ENCODE measurements at regions of chr2 and their contacts with region 1.

Region 1: DNA sequence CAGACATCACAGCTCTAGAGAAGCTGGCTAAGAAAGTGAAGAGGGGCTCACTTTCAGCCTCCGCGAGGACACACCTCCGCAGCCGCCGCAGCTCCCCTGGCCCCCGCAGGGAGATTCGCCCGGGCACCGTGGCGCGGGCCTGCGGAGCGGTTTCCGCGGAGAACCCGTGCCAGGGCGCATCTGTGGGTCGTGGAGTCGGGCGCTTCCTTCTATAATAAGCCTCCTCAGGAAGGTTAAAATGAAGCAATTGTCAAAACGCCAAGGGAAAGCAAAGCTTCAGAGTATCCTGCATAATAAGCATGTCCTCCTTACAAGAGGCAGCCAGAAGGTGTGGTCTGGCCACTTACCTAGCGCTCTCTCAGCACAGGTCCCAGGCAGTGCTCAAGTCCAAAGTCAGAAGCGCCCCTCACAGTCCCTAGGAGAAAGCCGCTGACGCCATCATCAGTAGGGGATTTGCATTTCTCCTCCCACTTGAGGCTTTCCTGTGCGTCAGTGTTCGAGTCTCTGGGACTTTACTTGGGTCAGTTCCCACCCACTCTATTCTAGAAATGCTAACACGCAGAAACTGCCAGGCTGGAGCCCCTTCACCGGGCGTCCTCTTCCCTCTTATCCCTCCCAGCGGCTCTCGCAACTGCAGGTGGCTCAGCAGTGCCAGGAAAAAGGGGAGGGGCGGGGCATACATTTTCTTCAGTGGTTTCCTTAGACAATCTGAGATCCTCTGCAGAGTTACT is at the start of gene STAT4:
- DNase-seq: no peak
- H3K4me3 ChIP-seq: peak within 1 kb of the TSS; percentile 58
- CTCF ChIP-seq: no peak

Region 2: DNA sequence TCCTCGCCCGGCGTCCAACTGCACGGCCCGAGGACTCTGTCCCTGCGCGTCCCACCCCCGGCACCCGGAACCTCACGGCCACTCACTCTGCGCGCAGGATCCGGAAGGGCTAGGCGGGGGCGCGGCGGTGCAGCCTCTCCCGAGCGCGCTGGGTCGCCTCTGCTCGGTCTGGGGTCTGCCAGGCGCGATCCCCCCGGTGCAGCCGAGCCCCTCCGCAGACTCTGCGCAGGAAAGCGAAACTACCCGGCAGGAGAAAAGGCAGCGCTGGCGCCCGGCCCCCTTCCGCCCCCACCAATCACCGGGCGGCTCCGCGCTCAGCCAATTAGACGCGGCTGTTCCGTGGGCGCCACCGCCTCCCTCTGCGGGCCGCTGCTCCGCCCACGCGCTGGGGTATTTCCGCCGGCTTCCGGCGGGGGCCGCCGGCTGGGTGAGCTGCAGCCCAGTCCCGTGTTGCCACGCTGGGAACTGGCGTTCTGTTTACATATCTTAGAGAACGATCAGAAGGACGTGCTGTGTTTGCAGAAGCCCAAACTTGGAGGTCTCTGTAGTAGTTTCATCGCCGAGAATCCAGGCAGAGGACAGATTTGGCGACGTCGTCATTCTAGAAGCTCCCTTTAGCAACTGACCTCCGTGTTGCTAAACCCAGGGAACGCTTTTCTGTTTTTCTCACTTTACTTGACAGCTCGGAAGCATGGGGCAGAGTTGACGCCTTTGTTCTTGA is 136.7 kb before region 1 on chr2 and contains the start of gene STAT1:
- CTCF ChIA-PET with region 1: interaction called, 13 read pairs
- POLR2A ChIA-PET with region 1: interaction called, 3 read pairs
- DNase-seq: peak; percentile 77
- H3K4me3 ChIP-seq: peak within 1 kb of the TSS; percentile 95
- CTCF ChIP-seq: peak; percentile 2

Region 3: DNA sequence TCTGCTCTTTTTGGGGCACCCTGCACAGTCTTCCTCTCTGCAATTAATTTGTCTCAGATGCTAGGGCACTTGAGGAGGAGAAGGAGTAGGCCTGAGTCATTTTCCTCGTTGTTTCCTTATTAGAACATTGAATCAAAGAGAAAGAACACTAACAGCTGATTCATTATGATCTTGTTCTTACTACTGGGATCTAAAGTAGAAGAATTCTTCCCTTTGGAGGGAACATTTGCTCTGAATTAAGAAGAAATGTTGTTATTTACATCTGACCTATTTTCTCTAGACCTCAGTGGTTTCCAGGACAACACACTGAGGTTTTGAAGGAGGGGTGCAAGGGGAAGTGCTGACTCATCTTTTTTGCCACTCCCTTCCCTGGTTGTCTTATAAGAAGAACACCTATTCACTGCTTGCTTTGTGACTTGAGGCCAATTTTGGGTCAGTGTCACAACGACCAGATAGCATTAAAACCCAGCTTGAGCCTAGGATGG is 112.5 kb before region 1 on chr2:
- CTCF ChIA-PET with region 1: interaction called, 542 read pairs
- POLR2A ChIA-PET with region 1: no interaction called
- DNase-seq: no peak
- H3K4me3 ChIP-seq: no peak overlapping the region
- CTCF ChIP-seq: no peak

Region 4: GRCh38 chr2:191059308-191059707 is 91.5 kb before region 1 on chr2:
- CTCF ChIA-PET with region 1: interaction called, 542 read pairs
- POLR2A ChIA-PET with region 1: no interaction called
- DNase-seq: no peak
- H3K4me3 ChIP-seq: no peak overlapping the region
- CTCF ChIP-seq: no peak

Region 5: DNA sequence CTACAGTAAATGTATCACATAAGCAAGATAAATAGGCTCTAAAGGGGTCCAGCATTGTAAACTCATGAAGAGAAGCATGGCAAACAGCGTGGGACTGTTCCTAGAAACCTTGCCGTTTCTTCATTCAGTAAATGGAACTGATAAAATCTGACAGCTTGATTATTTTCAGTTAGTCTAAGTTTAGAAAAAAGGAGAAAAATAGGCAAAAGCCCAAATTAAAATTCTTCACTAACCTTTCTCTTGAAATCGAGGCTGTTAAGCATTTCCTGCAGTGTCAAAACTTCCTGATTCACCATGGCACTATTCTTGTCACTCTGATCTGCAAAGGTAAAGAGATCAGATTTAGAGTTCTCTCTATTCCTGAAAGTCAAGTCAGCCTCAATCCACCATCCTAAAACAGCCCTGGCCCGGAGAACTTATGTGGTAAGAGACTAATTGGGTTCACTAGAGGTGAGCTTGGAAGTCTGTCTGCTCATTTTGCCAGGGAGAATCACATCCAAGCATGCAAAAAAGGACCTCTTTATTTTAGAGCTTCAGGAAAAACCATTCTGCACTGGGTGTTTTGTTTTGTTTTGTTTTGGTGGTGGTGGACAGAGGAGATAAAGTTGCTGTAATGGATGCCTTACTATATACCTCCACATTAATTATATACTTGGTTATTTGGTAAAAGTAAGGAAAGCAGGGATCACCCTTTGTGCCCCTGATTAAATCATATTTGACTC is 84.4 kb before region 1 on chr2:
- CTCF ChIA-PET with region 1: interaction called, 14 read pairs
- POLR2A ChIA-PET with region 1: no interaction called
- DNase-seq: no peak
- H3K4me3 ChIP-seq: no peak overlapping the region
- CTCF ChIP-seq: no peak

Region 6: GRCh38 chr2:191078165-191078867 is 72.4 kb before region 1 on chr2:
- CTCF ChIA-PET with region 1: no interaction called
- POLR2A ChIA-PET with region 1: no interaction called
- DNase-seq: no peak
- H3K4me3 ChIP-seq: no peak overlapping the region
- CTCF ChIP-seq: no peak

Region 7: GRCh38 chr2:191515551-191515950 is 364.8 kb after region 1 on chr2:
- CTCF ChIA-PET with region 1: interaction called, 12 read pairs
- POLR2A ChIA-PET with region 1: no interaction called
- DNase-seq: no peak
- H3K4me3 ChIP-seq: no peak overlapping the region
- CTCF ChIP-seq: no peak

Region 8: DNA sequence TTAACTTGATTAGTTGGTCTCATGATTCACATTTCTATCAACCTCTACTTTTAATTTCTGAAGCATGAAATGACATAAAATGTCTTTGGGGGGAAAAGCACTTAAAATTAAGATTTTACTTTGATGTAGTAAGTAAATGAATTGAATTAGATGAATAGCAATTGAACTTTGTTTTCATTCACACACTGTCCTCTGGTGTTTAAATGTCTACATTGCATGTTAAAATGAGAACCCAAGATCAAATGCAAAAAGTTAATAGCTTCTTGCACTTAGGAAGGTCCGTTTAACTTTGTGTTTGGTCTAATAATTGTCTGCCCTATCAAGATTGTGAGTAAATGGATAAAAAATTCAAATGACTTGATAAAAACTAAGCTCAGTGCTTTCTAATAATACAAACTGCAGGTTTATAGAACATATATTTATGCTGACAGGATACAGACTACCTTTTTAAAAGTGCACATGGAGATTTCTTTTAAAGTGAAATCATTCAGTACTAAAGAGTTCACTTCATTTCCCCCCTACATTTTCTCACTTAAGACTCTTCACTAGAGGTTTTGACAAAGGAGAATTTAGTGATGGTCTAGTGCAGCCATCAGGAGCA is 370.9 kb after region 1 on chr2:
- CTCF ChIA-PET with region 1: interaction called, 23 read pairs
- POLR2A ChIA-PET with region 1: no interaction called
- DNase-seq: no peak
- H3K4me3 ChIP-seq: no peak overlapping the region
- CTCF ChIP-seq: peak; percentile 47